Pancreas (tissue), 10 donors: ENCODE measurements at regions of chr12 and their contacts with region 1.

Region 1: GRCh38 chr12:49866859-49867579 is 24.1 kb upstream of the BCDIN3D start:
- DNase-seq: peak; percentile 55 to 90 (median 81)
- ATAC-seq: peak; percentile 73 to 91 (median 81)
- H3K4me3 ChIP-seq: no peak overlapping the region
- H3K27ac ChIP-seq: no peak overlapping the region
- H3K4me1 ChIP-seq: peaks cover 3 to 12% (median 5%) of the 10 kb centered on the region in 3 donors
- H3K27me3 ChIP-seq: no peaks in the 10 kb centered on the region
- CTCF ChIP-seq: peak; percentile 91 to 97 (median 96)

Region 2: DNA sequence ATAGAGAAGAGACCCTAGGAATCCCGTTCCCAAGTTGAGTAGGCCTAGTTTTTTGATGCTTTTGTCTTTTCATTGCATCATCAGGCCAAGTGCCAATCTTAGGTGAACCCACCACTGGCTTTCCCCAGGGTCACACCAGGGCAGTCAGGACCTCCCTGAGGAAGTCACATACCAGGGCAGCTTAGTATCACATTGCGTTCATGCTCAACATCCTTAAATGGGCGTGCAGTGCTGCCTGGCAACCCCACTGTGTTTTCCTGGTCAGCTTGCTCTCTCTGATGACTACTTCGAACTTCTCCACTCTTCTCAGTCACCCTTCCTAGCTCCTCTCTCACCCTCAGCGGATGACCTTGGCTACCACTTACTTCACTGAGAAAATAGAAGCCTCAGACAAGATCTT is 199.4 kb after region 1 on chr12:
- intact Hi-C with region 1: loop called in 2 of 3 experiments (anchors 10 kb)
- DNase-seq: no peak
- ATAC-seq: no peak
- H3K4me3 ChIP-seq: no peak overlapping the region
- H3K27ac ChIP-seq: no peak overlapping the region
- H3K4me1 ChIP-seq: no peaks in the 10 kb centered on the region
- H3K27me3 ChIP-seq: no peaks in the 10 kb centered on the region
- CTCF ChIP-seq: no peak